ENCODE measurements at regions of chr17 and their contacts with region 1.

Region 1: DNA sequence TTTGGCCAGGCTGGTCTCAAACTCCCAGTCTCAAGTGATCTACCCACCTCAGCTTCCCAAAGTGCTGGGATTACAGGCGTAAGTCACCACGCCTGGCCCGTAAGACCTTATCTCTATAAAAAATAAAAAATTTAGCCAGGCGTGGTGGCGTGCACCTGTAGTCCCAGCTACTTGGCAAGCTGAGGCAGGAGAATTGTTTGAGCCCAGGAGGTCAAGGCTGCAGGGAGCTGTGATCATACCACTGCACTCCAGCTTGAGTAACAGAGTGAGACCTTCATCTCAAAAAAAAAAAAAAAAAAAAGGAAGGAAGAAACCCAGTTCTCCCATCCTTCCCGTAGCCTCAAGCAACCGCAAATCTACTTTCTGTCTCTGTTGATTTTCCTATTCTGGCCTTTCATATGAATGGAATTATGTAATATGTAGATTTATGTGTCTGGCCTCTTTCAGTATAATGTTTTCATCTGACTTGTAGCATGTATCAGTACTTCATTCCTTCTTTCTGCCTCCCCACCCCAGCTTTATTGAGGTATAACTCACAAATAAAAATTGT is 11.2 kb downstream of the CASC3 start:
- DNase-seq: no peak
- H3K4me3 ChIP-seq: no peak overlapping the region
- H3K27ac ChIP-seq: no peak overlapping the region
- H3K27me3 ChIP-seq: no peaks in the 10 kb centered on the region
- CTCF ChIP-seq: no peak

Region 2: GRCh38 chr17:40168262-40168832 is 16.9 kb after region 1 on chr17:
- CTCF ChIA-PET with region 1: interaction called, 11 read pairs
- POLR2A ChIA-PET with region 1: interaction called, 6 read pairs
- DNase-seq: peak; percentile 41
- H3K4me3 ChIP-seq: no peak overlapping the region
- H3K27ac ChIP-seq: no peak overlapping the region
- H3K27me3 ChIP-seq: no peaks in the 10 kb centered on the region
- CTCF ChIP-seq: peak; percentile 78

Measured in AG04450 (cell line).